Mammary epithelial cell (primary cell): ENCODE measurements at regions of chr2 and their contacts with region 1.

Region 1: GRCh38 chr2:26422947-26423629 is 21.4 kb downstream of the DRC1 start:
- DNase-seq: no peak
- H3K4me3 ChIP-seq: no peak overlapping the region
- H3K27ac ChIP-seq: no peak overlapping the region
- H3K4me1 ChIP-seq: no peaks in the 10 kb centered on the region
- H3K27me3 ChIP-seq: no peaks in the 10 kb centered on the region
- CTCF ChIP-seq: no peak

Region 2: DNA sequence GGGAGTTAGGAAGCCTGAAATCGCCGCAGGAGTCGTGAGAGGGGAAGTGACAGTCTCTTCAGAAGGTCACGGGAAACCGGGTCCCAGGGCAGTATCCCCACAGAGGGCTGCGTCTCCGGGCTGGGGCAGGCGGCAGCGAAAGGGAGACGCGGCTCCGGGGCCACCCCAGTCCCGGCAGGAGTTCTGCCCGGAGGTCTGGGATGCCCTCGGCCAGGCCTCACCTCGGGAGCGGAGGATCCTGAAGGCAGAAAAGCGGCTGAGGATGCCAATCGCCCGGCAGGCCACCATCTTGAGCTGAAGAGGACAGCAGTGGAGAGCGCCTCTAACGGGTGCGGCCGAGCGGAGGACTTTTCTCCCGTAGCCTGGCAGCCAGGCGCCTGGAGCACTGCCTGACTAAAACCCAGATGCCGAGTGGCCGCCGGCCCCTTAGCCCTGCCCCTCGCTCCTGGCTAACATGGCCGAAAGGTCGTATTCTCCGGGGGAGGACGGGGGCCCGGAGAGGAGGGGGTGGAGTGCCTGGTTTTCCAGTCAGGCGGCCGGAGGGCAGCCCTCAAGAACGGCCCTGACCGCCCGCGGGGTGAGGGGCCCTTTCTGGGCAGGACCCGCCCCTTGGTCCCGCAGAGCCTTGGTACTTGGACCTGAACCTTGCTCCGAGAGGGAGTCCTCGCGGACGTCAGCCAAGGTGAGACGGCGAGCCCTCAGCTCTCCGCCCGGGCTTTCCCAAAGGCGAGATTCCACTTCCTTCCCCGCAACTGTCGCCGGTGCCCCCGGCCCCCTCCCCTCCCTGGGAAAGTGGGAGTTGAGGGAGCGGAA is 178.6 kb before region 1 on chr2 and contains the starts of genes HADHA and HADHB:
- CTCF ChIA-PET with region 1: no interaction called
- dilution Hi-C with region 1: no loop called
- in situ Hi-C with region 1: no loop called
- intact Hi-C with region 1: no loop called
- DNase-seq: peak; percentile 90
- H3K4me3 ChIP-seq: peak within 1 kb of the TSS; percentile 89 to 94 (median 91)
- H3K27ac ChIP-seq: peak within 1 kb of the TSS; percentile 88
- H3K4me1 ChIP-seq: peaks cover 18% of the 10 kb centered on the region
- H3K27me3 ChIP-seq: no peaks in the 10 kb centered on the region
- CTCF ChIP-seq: peak; percentile 4 to 40
- total RNA-seq, gene HADHA: 155 to 174 TPM
- total RNA-seq, gene HADHB: 126 to 144 TPM

Region 3: GRCh38 chr2:26456440-26457250 is 33.6 kb after region 1 on chr2:
- CTCF ChIA-PET with region 1: no interaction called
- dilution Hi-C with region 1: loop called (anchors 5 kb)
- in situ Hi-C with region 1: no loop called
- intact Hi-C with region 1: no loop called
- DNase-seq: peak; percentile 17
- H3K4me3 ChIP-seq: no peak overlapping the region
- H3K27ac ChIP-seq: no peak overlapping the region
- H3K4me1 ChIP-seq: no peaks in the 10 kb centered on the region
- H3K27me3 ChIP-seq: no peaks in the 10 kb centered on the region
- CTCF ChIP-seq: no peak

Region 4: DNA sequence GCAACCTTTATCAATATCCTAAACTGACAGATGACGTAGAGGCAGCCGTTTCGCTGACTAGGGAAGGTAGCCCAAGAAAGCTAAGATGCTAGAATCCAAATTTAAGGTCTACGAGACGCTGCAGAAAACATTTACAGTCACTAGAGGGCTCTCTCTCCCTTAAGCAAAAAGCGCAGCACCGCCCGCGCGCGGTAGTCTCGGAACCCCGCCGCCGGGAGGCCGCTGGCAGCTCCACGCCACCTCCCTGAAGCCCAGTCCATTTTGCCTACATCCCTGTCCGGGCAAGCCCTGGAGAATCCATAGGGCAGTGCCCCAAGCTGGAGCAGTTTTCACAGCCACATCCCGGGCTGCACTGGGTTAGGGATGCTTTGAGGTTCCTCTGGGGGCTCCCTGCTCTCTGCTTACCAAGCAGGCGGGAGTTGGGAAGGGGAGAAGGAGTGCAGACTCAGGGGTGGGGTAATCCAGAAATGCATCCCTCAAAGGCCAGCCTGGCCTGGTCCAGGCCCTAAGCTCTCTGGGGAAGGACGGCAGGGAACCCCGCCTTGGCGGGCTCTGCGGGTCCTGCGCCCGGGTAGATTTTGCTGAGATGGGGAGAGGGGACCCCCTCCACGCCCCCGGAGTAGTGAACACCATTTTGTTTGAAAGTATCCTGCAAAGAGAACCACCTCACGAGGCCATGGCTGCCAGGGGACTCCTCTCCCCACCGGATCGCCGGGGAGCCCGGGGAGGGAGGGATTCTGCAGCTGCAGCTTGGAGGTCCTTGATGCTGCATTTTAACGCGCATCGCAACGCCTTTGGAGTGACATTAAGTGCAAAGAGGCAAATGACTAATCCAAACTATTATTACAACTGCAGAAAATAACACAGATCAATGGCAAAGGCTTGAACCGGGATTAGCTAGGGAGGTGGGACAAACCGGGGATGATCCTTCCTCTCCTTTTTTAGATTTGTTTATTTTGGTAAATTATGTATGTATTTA is 423.5 kb after region 1 on chr2:
- CTCF ChIA-PET with region 1: no interaction called
- dilution Hi-C with region 1: no loop called
- in situ Hi-C with region 1: no loop called
- intact Hi-C with region 1: no loop called
- DNase-seq: peak; percentile 52
- H3K4me3 ChIP-seq: no peak overlapping the region
- H3K27ac ChIP-seq: no peak overlapping the region
- H3K4me1 ChIP-seq: peaks cover 23% of the 10 kb centered on the region
- H3K27me3 ChIP-seq: peaks cover 36% of the 10 kb centered on the region
- CTCF ChIP-seq: peak; percentile 63 to 77